ENCODE measurements at regions of chr6 and their contacts with region 1.

Region 1: GRCh38 chr6:152170705-152171667 is 363.5 kb downstream of the ESR1 start:
- DNase-seq: peak; percentile 80
- ATAC-seq: peak; percentile 94
- H3K4me3 Mint-ChIP-seq: peak overlapping the region; percentile 53
- H3K27ac Mint-ChIP-seq: peak overlapping the region; percentile 96
- H3K4me1 Mint-ChIP-seq: peaks cover 51% of the 10 kb centered on the region
- H3K27me3 Mint-ChIP-seq: no peaks in the 10 kb centered on the region

Region 2: DNA sequence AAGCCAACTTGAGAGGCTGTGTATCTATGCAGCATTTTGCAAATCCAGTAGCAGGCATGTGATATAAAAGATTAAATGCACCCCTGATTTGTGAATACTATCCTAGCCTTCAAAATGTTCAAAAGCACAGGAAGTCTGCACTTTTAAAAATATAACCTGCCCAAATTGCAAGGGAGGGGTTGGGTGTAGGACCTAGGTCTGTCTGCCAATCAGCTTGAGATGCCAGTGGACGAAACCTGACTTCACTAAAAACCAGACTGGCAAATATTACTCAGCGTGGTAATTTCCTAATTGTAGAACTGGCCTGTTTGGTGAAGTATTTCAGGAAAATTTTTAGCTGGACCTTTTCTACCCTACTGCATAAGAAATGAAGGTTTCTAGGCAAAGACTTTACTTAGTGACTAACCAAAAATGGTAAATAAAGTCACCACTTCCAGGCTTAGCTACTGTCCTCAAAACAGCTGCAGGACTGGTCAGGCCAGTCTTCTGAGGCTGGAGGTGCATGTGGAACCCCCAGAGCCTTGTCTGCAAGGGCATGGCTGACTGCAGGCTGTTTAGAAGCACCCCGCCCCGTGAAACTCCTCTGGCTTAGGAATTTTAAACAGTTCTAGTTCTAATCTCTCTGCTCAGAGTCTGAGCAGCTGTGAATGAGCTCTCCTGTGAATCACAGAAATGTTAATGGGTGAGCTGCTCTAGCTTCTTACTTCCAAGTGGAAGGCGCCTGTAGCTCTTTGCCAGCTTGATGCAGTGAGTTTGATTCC is 468.0 kb before region 1 on chr6:
- CTCF ChIA-PET with region 1: no interaction called
- POLR2A ChIA-PET with region 1: no interaction called
- intact Hi-C with region 1: loop called (anchors 1 kb)
- DNase-seq: no peak
- ATAC-seq: peak; percentile 11
- H3K4me3 Mint-ChIP-seq: no peak overlapping the region
- H3K27ac Mint-ChIP-seq: peak overlapping the region; percentile 35
- H3K4me1 Mint-ChIP-seq: peaks cover 36% of the 10 kb centered on the region
- H3K27me3 Mint-ChIP-seq: peaks cover 7% of the 10 kb centered on the region

Region 3: GRCh38 chr6:152160346-152160745 is 10.6 kb before region 1 on chr6:
- CTCF ChIA-PET with region 1: no interaction called
- POLR2A ChIA-PET with region 1: interaction called, 4 read pairs
- intact Hi-C with region 1: loop called (anchors 1 kb)
- DNase-seq: peak; percentile 72
- ATAC-seq: peak; percentile 93
- H3K4me3 Mint-ChIP-seq: no peak overlapping the region
- H3K27ac Mint-ChIP-seq: peak overlapping the region; percentile 93
- H3K4me1 Mint-ChIP-seq: peaks cover 33% of the 10 kb centered on the region
- H3K27me3 Mint-ChIP-seq: no peaks in the 10 kb centered on the region

Region 4: GRCh38 chr6:152184917-152185574 is 14.1 kb after region 1 on chr6:
- CTCF ChIA-PET with region 1: interaction called, 11 read pairs
- POLR2A ChIA-PET with region 1: interaction called, 18 read pairs
- intact Hi-C with region 1: loop called (anchors 1 kb)
- DNase-seq: peak; percentile 20
- ATAC-seq: peak; percentile 68
- H3K4me3 Mint-ChIP-seq: peak overlapping the region; percentile 72
- H3K27ac Mint-ChIP-seq: peak overlapping the region; percentile 95
- H3K4me1 Mint-ChIP-seq: peaks cover 86% of the 10 kb centered on the region
- H3K27me3 Mint-ChIP-seq: no peaks in the 10 kb centered on the region

Region 5: GRCh38 chr6:152232501-152233151 is 61.6 kb after region 1 on chr6:
- CTCF ChIA-PET with region 1: no interaction called
- POLR2A ChIA-PET with region 1: no interaction called
- intact Hi-C with region 1: loop called in 1 of 2 experiments (anchors 5 kb)
- DNase-seq: peak; percentile 57
- ATAC-seq: peak; percentile 69
- H3K4me3 Mint-ChIP-seq: peak overlapping the region; percentile 66
- H3K27ac Mint-ChIP-seq: peak overlapping the region; percentile 80
- H3K4me1 Mint-ChIP-seq: peaks cover 26% of the 10 kb centered on the region
- H3K27me3 Mint-ChIP-seq: no peaks in the 10 kb centered on the region

Region 6: DNA sequence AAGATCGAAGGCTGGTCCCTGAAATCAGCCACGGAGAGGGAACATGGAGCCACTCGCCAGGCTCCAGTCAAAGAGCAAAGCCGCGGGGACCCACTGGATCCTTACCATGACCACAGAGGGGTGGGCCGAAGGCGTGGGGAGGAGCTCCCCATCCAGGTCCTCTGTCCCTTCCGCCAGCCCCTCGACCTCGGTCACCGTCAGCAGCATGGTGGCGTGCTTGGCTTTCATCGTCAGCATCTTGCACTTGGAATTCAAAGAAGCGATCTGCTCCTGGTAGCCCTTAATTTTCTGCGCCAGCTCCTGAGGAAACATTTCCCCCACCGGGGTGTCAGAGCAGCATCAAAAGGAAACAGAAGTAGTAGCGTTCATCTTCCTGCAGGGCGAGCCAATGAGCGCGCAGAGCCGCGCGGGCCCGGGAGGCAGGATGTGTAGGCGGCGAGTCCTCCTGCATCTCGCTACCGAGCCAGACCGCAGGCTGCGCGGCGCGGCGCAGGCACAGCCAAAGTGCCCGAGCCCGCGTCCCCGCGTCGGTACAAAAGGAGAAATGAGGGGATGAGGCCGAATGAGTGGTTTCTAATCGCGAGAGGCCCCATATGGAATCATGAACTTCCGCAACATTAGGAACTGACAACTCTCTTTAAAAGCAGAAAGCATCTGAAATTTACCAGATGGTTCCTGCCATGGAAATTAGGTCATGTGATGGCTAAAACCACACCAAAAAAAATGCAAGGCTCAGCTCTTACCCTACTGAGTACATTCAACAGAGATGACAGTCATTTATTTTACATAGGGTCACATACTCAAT is 131.0 kb after region 1 on chr6:
- CTCF ChIA-PET with region 1: no interaction called
- POLR2A ChIA-PET with region 1: no interaction called
- intact Hi-C with region 1: loop called in 1 of 2 experiments (anchors 1 kb)
- DNase-seq: peak; percentile 95
- ATAC-seq: peak; percentile 92
- H3K4me3 Mint-ChIP-seq: peak overlapping the region; percentile 92
- H3K27ac Mint-ChIP-seq: peak overlapping the region; percentile 99
- H3K4me1 Mint-ChIP-seq: peaks cover 31% of the 10 kb centered on the region
- H3K27me3 Mint-ChIP-seq: no peaks in the 10 kb centered on the region

Measured in activated CD4-positive, alpha-beta T cell treated with anti-CD3 and anti-CD28 coated beads for 36 hours (primary cell).